Colonic mucosa (tissue), 4 donors: ENCODE measurements at regions of chr17 and their contacts with region 1.

Region 1: DNA sequence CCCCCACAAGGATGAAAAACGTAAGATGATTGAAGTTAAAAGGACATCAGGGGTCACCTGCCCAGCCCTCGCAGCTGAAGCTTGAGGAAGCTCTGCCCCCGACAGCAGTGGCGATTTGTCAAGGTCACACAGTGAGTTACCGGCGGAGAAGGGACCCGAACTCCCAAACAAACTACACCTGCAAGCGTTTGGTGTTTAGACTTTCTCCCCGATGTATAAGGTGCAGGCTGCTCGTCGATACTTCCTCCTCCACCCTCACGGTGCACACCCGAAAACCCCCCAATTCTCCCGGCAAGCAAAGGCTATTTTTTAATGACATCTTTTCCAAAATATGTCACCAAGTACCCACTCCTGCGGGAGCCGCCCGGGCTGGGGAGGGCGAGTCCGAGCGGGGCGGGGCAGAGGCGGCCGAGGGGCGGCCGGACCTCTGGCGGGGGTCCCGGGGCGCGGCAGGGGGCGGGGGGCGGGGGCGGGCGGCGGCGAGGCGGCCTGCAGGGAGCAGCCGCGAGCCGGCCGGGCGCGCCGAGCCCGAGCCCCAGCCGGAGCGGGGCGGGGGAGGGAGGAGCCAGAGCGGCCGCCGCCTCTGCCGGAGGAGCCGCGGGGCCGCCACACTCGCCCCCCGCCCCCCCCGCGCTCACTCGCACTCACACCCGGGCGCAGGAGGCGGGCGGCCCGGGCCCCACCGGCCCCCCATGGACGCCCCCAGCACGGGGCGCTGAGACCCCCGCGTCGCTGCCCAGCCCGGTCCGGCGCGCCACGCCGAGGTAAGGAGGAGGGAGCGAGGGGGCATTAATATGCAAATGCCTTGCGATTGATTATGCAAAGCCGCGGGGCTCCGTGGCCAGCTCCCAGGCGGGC is at the start of gene THRA:
- DNase-seq: peak; percentile 75
- H3K4me3 ChIP-seq: peak within 1 kb of the TSS; percentile 82
- H3K27ac ChIP-seq: peak within 1 kb of the TSS; percentile 77
- H3K4me1 ChIP-seq: peaks cover 13% of the 10 kb centered on the region
- H3K27me3 ChIP-seq: no peaks in the 10 kb centered on the region
- CTCF ChIP-seq: no peak
- total RNA-seq, gene THRA: 40.3 to 44.5 TPM

Region 2: DNA sequence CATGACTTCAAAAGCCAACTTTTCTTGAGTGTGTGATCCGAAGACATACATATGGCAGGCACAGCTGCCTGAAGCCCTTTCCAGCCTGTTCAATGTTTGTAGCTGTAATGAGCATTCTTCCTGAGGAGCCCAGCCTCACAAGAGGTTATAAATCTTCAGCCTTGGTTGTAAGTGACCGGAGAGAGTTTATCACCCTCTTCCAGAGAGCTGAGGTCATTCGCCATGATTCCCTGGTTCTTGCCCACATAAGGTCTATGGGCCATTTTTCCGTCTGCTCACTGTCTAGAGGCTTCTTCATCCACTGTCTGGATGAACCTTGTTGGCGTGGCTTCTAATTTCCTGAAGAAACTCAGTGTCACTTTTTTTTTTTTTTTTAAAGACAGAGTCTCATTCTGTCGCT is 57.0 kb before region 1 on chr17:
- intact Hi-C with region 1: no loop called
- DNase-seq: no peak
- H3K4me3 ChIP-seq: no peak overlapping the region
- H3K27ac ChIP-seq: no peak overlapping the region
- H3K4me1 ChIP-seq: no peaks in the 10 kb centered on the region
- H3K27me3 ChIP-seq: no peaks in the 10 kb centered on the region
- CTCF ChIP-seq: no peak

Region 3: GRCh38 chr17:40098846-40099618 is 36.5 kb after region 1 on chr17:
- intact Hi-C with region 1: loop called (anchors 5 kb)
- DNase-seq: peak; percentile 100
- H3K4me3 ChIP-seq: peak overlapping the region; percentile 73
- H3K27ac ChIP-seq: peak overlapping the region; percentile 94
- H3K4me1 ChIP-seq: peaks cover 48% of the 10 kb centered on the region
- H3K27me3 ChIP-seq: no peaks in the 10 kb centered on the region
- CTCF ChIP-seq: no peak

Region 4: DNA sequence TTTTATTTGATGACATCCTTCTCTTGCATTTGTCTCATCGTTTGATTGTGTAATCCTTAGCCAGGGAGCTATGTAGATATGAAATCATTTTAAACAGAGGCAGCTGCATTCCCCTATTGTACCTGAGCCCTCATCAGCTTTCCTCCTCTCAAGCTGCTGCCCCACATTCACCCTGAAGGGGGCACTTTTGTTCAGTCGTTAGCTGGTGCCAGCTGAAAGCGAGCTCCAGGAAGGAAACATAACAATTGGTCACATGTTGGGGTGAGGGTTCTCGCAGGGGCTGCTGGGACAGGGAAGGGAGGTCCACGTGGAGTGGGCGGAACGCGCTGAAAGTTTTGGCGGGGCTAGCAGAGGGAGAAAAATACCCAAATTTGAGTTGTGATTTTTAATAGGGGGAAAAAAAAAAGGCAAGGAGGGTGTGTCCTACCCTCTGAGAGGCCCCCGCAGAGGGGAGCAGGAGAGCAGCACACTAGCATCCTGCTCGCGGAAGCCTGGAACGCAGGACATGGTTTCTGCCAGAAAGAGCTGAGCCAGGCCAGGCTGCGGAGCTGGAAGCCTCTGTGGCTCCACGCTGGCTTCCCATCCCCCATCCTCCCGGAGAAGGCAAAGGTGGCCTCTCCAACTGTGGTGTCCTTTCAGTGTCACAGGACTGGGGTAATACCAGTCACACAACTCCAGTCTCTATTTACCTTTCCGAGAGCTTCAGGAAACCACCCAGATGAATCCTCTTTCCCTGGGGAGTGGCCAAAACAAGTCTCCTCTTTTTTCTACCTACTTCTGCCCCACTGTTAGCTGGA is 50.8 kb after region 1 on chr17:
- intact Hi-C with region 1: loop called (anchors 5 kb)
- DNase-seq: peak; percentile 98
- H3K4me3 ChIP-seq: peak overlapping the region; percentile 36
- H3K27ac ChIP-seq: peak overlapping the region; percentile 93
- H3K4me1 ChIP-seq: peaks cover 37% of the 10 kb centered on the region
- H3K27me3 ChIP-seq: no peaks in the 10 kb centered on the region
- CTCF ChIP-seq: peak; percentile 76